ENCODE measurements at regions of chr10 and their contacts with region 1.

Region 1: DNA sequence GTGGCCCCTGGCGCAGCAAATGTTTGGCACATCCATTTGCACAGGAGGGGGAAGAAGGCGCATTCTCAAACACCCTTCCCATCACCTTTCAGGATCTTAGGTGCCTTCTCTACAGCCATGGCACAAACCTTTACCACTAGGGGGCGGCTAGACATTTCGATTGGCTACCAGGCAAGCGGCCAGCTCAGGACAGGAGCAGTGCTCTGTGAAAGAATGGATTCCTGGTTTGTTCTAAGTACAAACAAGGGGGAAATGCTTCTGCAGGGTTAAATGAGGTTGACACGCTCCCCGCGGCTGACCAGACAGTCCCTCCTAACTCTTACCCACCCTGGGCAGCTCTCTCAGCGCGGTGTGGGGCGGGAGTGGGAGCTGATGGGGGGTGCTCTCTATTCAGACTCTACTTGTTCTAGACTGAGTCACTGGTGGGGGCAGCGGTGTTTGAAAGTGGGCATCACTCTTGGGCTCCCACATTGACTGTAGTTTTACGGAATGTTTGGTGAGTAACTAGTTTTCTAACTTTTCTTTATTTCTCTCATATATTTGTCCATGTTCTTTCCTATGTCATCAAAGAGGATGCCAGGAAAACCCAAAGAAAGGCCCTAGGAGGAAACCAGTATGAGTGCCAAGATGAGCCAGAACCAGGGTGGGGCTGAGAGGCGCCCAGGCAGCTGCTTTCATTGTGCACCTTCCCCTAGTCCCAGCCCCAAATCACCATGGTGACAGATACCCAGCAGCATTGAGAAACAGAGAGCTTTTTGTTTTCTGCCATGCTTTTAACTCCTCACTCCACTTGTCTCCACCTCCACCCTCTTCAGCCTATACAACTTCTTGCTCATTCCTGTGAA is 61.4 kb upstream of the GPR158 start:
- DNase-seq: peak; percentile 53 to 85 (median 63)
- ATAC-seq: peak; percentile 99
- H3K4me3 ChIP-seq: no peak overlapping the region
- H3K27ac ChIP-seq: no peak overlapping the region
- H3K4me1 ChIP-seq: peaks cover 0 to 8% of the 10 kb centered on the region in 2 experiments; a peak in 2 of 5 replicates
- H3K27me3 ChIP-seq: no peaks in the 10 kb centered on the region
- CTCF ChIP-seq: peak; percentile 77 to 89 (median 85)
- EP300 ChIP-seq: no peak
- POLR2A ChIP-seq: no peak
- RAD21 ChIP-seq: peak; percentile 84 to 90

Region 2: DNA sequence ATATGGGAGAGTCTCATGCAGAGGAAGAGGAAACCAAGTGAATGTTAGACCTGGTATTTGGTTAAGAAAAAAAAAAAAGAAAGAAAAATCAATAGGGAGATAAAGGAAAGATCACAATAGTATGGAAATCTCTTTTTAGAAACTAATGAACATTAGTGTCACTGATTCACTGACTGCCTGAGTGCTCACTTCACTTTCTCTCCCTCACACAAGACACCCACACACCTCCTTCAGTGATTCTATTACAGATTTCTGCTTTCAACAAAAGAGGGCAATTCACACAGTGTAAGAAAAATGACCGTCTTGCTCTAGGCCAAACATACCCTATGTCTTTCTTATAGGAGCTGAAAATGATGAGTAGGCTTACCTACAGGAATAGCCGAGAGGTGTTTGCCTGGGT is 67.4 kb after region 1 on chr10:
- CTCF ChIA-PET with region 1: no interaction called
- POLR2A ChIA-PET with region 1: no interaction called
- in situ Hi-C with region 1: no loop called
- intact Hi-C with region 1: loop called (anchors 5 kb)
- DNase-seq: no peak
- ATAC-seq: no peak
- H3K4me3 ChIP-seq: no peak overlapping the region
- H3K27ac ChIP-seq: no peak overlapping the region
- H3K4me1 ChIP-seq: peaks cover 0 to 8% of the 10 kb centered on the region in 2 experiments; a peak in 2 of 5 replicates
- H3K27me3 ChIP-seq: peaks cover 0 to 11% of the 10 kb centered on the region in 2 experiments; a peak in 3 of 5 replicates
- CTCF ChIP-seq: no peak
- EP300 ChIP-seq: no peak
- POLR2A ChIP-seq: no peak
- RAD21 ChIP-seq: no peak

Region 3: DNA sequence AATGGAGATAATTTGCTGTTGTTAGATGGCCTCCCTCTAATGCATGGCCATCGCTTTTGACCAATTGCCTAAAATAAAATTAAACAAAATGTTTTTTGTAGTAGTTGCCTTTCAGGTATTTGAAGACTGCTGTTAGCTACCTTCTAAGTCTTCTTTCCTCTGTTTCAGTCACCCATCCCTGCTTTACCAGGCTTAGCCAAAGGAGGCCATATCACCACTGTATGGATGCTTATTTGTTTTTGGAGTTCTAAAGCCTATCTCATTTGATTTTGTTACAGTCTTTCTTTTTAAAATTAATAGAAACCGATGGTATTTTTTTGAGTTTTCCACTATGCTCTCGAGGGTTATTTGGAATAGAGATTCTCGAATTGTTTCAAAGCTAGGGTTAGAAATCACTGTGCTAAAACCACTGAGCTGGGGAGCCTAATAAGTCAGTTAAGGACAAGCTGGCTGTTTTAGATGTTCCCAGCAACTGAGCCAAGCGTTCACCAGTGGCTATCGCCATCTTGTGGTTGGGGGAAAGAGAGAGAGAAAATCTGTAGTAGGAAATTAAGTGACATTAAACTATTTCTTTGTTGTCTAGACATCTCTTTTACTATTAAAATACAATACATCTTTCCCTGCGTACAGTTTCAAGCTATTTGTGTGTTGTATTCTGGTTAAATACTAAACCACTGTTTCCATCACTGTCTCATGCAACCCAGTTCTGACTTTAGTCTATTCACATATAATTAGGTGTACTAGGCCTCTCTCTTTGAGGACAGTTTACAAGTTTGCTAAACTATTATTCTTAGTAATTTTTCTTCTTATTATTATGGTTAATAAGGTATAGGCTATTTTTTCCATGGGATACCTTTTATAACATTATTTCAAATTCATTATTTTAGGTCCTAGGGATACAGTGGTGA is 113.6 kb after region 1 on chr10:
- CTCF ChIA-PET with region 1: interaction called, 6 read pairs
- POLR2A ChIA-PET with region 1: no interaction called
- in situ Hi-C with region 1: no loop called
- intact Hi-C with region 1: loop called (anchors 1 kb)
- DNase-seq: peak; percentile 8 to 63 (median 15)
- ATAC-seq: peak; percentile 80
- H3K4me3 ChIP-seq: no peak overlapping the region
- H3K27ac ChIP-seq: no peak overlapping the region
- H3K4me1 ChIP-seq: no peaks in the 10 kb centered on the region
- H3K27me3 ChIP-seq: no peaks in the 10 kb centered on the region
- CTCF ChIP-seq: peak; percentile 67 to 86 (median 70)
- EP300 ChIP-seq: no peak
- POLR2A ChIP-seq: no peak
- RAD21 ChIP-seq: peak; percentile 86 to 93

Region 4: GRCh38 chr10:25639646-25640045 is 526.2 kb after region 1 on chr10:
- CTCF ChIA-PET with region 1: no interaction called
- POLR2A ChIA-PET with region 1: no interaction called
- in situ Hi-C with region 1: loop called (anchors 10 kb)
- intact Hi-C with region 1: loop called (anchors 5 kb)
- DNase-seq: peak in 2 of 4 experiments; percentile 19 to 21
- ATAC-seq: peak; percentile 86
- H3K4me3 ChIP-seq: no peak overlapping the region
- H3K27ac ChIP-seq: no peak overlapping the region
- H3K4me1 ChIP-seq: no peaks in the 10 kb centered on the region
- H3K27me3 ChIP-seq: no peaks in the 10 kb centered on the region
- CTCF ChIP-seq: peak in 2 of 3 experiments; percentile 11 to 38; a peak in 3 of 6 replicates
- EP300 ChIP-seq: no peak
- POLR2A ChIP-seq: no peak
- RAD21 ChIP-seq: peak; percentile 25 to 44; a peak in 2 of 4 replicates